Activated CD4-positive, alpha-beta memory T cell treated with anti-CD3 and anti-CD28 coated beads for 36 hours (primary cell): ENCODE measurements at regions of chr9 and their contacts with region 1.

Region 1: GRCh38 chr9:105712773-105713172 is 18.4 kb downstream of the TMEM38B start:
- DNase-seq: no peak
- H3K4me3 Mint-ChIP-seq: no peak overlapping the region
- H3K27ac Mint-ChIP-seq: no peak overlapping the region
- H3K4me1 Mint-ChIP-seq: peaks cover 8% of the 10 kb centered on the region
- H3K27me3 Mint-ChIP-seq: no peaks in the 10 kb centered on the region

Region 2: GRCh38 chr9:105447814-105448812 is 264.7 kb before region 1 on chr9 and contains the start of gene FSD1L:
- CTCF ChIA-PET with region 1: no interaction called
- POLR2A ChIA-PET with region 1: no interaction called
- intact Hi-C with region 1: loop called (anchors 5 kb)
- DNase-seq: peak; percentile 90
- H3K4me3 Mint-ChIP-seq: peak within 1 kb of the TSS; percentile 63
- H3K27ac Mint-ChIP-seq: peak within 1 kb of the TSS; percentile 49
- H3K4me1 Mint-ChIP-seq: peaks cover 13% of the 10 kb centered on the region
- H3K27me3 Mint-ChIP-seq: no peaks in the 10 kb centered on the region
- total RNA-seq, gene FSD1L: 3.2 to 3.6 TPM

Region 3: GRCh38 chr9:105608721-105609598 is 103.8 kb before region 1 on chr9:
- CTCF ChIA-PET with region 1: interaction called, 27 read pairs
- POLR2A ChIA-PET with region 1: no interaction called
- intact Hi-C with region 1: no loop called
- DNase-seq: no peak
- H3K4me3 Mint-ChIP-seq: no peak overlapping the region
- H3K27ac Mint-ChIP-seq: no peak overlapping the region
- H3K4me1 Mint-ChIP-seq: no peaks in the 10 kb centered on the region
- H3K27me3 Mint-ChIP-seq: no peaks in the 10 kb centered on the region

Region 4: DNA sequence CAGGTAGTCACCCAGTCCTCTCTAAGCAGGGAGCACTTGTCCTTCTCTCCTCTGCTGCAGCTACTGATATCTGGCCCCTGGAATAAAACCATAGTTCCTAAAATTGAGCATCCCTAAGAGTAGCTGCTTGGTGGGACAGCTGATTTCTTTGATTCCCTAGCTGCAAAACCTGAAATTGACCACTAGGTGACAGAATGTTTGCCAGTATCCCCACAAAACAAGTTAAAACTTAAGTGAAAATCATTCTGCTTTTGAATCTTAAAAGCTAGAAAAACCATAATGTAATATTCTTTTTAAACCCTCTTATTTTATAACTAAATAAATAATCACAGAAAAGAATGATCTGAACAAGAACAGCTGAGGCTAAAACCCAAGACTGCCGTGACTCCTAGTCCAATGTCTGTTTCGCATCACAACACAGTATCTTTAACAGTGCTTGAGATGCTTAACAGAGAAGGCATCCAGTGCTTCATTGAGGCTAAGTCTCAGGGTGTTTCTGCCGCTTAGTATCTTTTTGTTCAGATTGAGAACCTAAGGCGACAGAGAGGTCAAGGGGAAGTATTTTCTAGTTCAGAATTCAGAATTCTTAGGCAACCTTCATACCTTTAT is 74.9 kb before region 1 on chr9:
- CTCF ChIA-PET with region 1: interaction called, 17 read pairs
- POLR2A ChIA-PET with region 1: no interaction called
- intact Hi-C with region 1: no loop called
- DNase-seq: no peak
- H3K4me3 Mint-ChIP-seq: no peak overlapping the region
- H3K27ac Mint-ChIP-seq: no peak overlapping the region
- H3K4me1 Mint-ChIP-seq: no peaks in the 10 kb centered on the region
- H3K27me3 Mint-ChIP-seq: no peaks in the 10 kb centered on the region

Region 5: GRCh38 chr9:105656131-105656921 is 56.4 kb before region 1 on chr9:
- CTCF ChIA-PET with region 1: no interaction called
- POLR2A ChIA-PET with region 1: no interaction called
- intact Hi-C with region 1: loop called (anchors 5 kb)
- DNase-seq: peak; percentile 28
- H3K4me3 Mint-ChIP-seq: peak overlapping the region; percentile 59
- H3K27ac Mint-ChIP-seq: no peak overlapping the region
- H3K4me1 Mint-ChIP-seq: peaks cover 10% of the 10 kb centered on the region
- H3K27me3 Mint-ChIP-seq: peaks cover 25% of the 10 kb centered on the region